ENCODE measurements at regions of chr1 and their contacts with region 1.

Region 1: DNA sequence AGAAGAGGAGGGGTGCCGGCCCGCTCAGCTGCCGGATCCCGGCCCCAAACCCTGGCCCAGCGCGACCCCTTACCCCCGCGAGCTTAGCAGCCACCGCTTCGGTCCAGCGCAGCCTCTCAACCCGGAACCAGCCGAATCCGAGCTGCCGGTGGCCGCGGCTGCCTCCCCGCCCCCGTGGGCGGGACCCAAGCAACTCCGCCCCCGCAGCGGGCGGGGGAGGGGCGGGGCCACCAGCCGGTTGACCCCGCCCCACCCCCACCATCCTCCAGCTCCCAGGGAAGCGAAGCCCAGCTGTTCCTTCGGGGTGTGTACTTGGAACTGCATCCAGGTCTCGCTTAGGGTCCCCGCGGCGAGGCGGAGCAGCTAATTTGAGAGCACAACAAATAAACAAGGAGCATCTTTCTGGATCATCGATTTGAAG is at the start of gene TRIM62:
- DNase-seq: peak; percentile 70 to 80 (median 73)
- H3K4me3 ChIP-seq: peak within 1 kb of the TSS; percentile 54 to 73
- H3K4me3 Mint-ChIP-seq: peak within 1 kb of the TSS; percentile 86 to 93 (median 92)
- H3K27ac ChIP-seq: peak within 1 kb of the TSS; percentile 58
- H3K27ac Mint-ChIP-seq: peak within 1 kb of the TSS; percentile 63 to 95 (median 91)
- H3K4me1 ChIP-seq: peaks cover 16% of the 10 kb centered on the region
- H3K4me1 Mint-ChIP-seq: peaks cover 19 to 46% (median 33%) of the 10 kb centered on the region in 4 donors
- H3K27me3 ChIP-seq: no peaks in the 10 kb centered on the region
- H3K27me3 Mint-ChIP-seq: peaks cover 0 to 5% of the 10 kb centered on the region in 2 donors
- total RNA-seq, gene TRIM62: 20.0 to 26.2 TPM

Region 2: GRCh38 chr1:32538887-32539583 is 642.9 kb before region 1 on chr1 and contains the start of gene ZBTB8A:
- CTCF ChIA-PET with region 1: no interaction called
- POLR2A ChIA-PET with region 1: no interaction called
- intact Hi-C with region 1: no loop called
- DNase-seq: no peak
- H3K4me3 ChIP-seq: no peak within 1 kb of the TSS
- H3K4me3 Mint-ChIP-seq: peak within 1 kb of the TSS; percentile 75 to 91 (median 86)
- H3K27ac ChIP-seq: no peak within 1 kb of the TSS
- H3K27ac Mint-ChIP-seq: peak within 1 kb of the TSS in 4 of 7 donors; percentile 38 to 68 (median 52)
- H3K4me1 ChIP-seq: peaks cover 4% of the 10 kb centered on the region
- H3K4me1 Mint-ChIP-seq: peaks cover 5 to 19% (median 8%) of the 10 kb centered on the region in 4 donors
- H3K27me3 ChIP-seq: peaks cover 22% of the 10 kb centered on the region
- H3K27me3 Mint-ChIP-seq: peaks cover 43 to 49% of the 10 kb centered on the region in 2 donors
- total RNA-seq, gene ZBTB8A: not detected

Region 3: DNA sequence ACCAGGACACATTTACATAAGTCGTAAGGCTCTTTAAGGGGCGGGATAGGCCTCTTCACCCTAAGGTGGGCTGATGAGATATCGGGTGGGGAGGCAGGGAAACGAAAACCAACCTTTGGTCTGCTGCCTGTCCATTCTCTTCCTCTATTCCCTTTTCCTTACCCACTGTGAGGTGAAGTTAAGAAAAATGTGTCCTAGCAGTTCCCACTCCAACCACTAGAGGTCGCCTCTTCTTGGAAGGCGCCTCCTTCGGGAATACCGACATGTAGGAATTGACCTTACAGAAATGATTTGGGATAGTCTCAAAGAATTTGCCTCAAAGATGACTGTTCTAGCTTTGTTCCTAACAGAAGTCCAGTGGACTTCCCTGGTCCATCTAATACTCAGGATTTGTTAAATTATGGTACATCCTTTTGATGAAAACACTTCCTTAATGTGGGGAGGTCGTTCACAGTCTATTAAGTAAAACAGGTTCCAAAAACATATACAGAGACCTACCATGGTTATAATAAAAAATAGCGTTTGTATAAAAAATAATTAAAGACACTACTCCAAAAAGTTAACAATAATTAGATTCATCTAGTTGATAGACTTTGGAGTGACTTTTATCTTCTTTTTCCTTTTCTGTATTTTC is 86.8 kb before region 1 on chr1:
- CTCF ChIA-PET with region 1: interaction called, 5 read pairs
- POLR2A ChIA-PET with region 1: interaction called, 11 read pairs
- intact Hi-C with region 1: no loop called
- DNase-seq: no peak
- H3K4me3 ChIP-seq: no peak overlapping the region
- H3K4me3 Mint-ChIP-seq: peak overlapping the region in 1 of 8 donors; percentile 31
- H3K27ac ChIP-seq: no peak overlapping the region
- H3K27ac Mint-ChIP-seq: peak overlapping the region in 2 of 7 donors; percentile 53 to 55
- H3K4me1 ChIP-seq: peaks cover 42% of the 10 kb centered on the region
- H3K4me1 Mint-ChIP-seq: peaks cover 26 to 58% (median 41%) of the 10 kb centered on the region in 4 donors
- H3K27me3 ChIP-seq: no peaks in the 10 kb centered on the region
- H3K27me3 Mint-ChIP-seq: no peaks in the 10 kb centered on the region

Region 4: DNA sequence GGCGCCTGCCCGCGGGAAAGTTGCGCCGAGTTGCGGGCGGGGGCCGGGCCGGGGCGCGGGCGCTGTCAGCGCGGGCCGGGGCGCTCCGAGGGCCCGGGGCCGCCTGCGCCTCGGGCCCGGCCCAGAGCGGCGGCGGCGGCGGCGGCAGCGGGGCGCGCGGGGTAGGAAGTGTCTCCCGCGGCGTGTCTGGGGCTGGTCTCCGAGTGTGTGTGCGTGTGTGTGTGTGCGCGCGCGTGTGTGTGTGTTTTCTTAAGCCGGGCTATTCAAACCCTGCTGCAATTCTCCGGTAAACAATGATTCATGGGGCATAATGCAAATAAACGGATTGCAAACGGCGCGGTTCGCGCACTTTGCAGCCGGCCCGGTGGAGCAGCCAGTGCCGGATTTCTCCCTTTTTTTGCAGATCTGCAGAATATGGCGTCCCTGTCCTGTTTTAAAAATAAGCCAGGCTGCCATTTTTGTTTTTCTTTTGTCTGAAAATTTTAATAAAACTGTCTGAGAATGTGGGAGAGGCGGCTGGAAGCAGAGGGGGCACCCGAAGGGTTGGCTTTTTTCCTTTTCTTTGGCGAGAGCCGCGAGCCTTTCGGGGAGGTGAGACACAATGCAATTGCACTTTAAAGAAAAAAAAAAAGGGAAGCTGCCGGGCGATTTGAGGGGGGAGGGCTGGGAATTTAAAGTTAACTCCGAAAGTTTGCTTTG is 74.9 kb after region 1 on chr1:
- CTCF ChIA-PET with region 1: no interaction called
- POLR2A ChIA-PET with region 1: interaction called, 9 read pairs
- intact Hi-C with region 1: loop called (anchors 2 kb)
- DNase-seq: peak; percentile 58 to 69 (median 60)
- H3K4me3 ChIP-seq: peak overlapping the region; percentile 33 to 55
- H3K4me3 Mint-ChIP-seq: peak overlapping the region; percentile 96 to 100 (median 100)
- H3K27ac ChIP-seq: peak overlapping the region; percentile 40
- H3K27ac Mint-ChIP-seq: peak overlapping the region; percentile 92 to 99 (median 98)
- H3K4me1 ChIP-seq: peaks cover 35% of the 10 kb centered on the region
- H3K4me1 Mint-ChIP-seq: peaks cover 25 to 48% (median 33%) of the 10 kb centered on the region in 4 donors
- H3K27me3 ChIP-seq: no peaks in the 10 kb centered on the region
- H3K27me3 Mint-ChIP-seq: peaks cover 0 to 2% of the 10 kb centered on the region in 2 donors

Region 5: GRCh38 chr1:33349778-33350610 is 168.1 kb after region 1 on chr1:
- CTCF ChIA-PET with region 1: no interaction called
- POLR2A ChIA-PET with region 1: interaction called, 12 read pairs
- intact Hi-C with region 1: loop called (anchors 2 kb)
- DNase-seq: peak; percentile 73 to 82 (median 78)
- H3K4me3 ChIP-seq: peak overlapping the region; percentile 82 to 84
- H3K4me3 Mint-ChIP-seq: peak overlapping the region; percentile 87 to 93 (median 91)
- H3K27ac ChIP-seq: peak overlapping the region; percentile 65
- H3K27ac Mint-ChIP-seq: peak overlapping the region; percentile 79 to 95 (median 91)
- H3K4me1 ChIP-seq: peaks cover 47% of the 10 kb centered on the region
- H3K4me1 Mint-ChIP-seq: peaks cover 25 to 54% (median 42%) of the 10 kb centered on the region in 4 donors
- H3K27me3 ChIP-seq: no peaks in the 10 kb centered on the region
- H3K27me3 Mint-ChIP-seq: no peaks in the 10 kb centered on the region